Esophagus squamous epithelium (tissue), 5 donors: ENCODE measurements at regions of chr5 and their contacts with region 1.

Region 1: GRCh38 chr5:133051580-133052332 is at the start of gene HSPA4:
- DNase-seq: peak; percentile 89
- H3K4me3 ChIP-seq: peak within 1 kb of the TSS; percentile 79 to 99 (median 90)
- H3K27ac ChIP-seq: peak within 1 kb of the TSS; percentile 98 to 100 (median 99)
- H3K4me1 ChIP-seq: peaks cover 4 to 53% (median 26%) of the 10 kb centered on the region in 3 donors
- H3K27me3 ChIP-seq: no peaks in the 10 kb centered on the region
- CTCF ChIP-seq: peak in 2 of 6 experiments; percentile 1 to 3
- POLR2A ChIP-seq: peak in 3 of 4 donors; percentile 91 to 98 (median 96)
- total RNA-seq, gene HSPA4: 47.7 to 82.4 (median 67.3) TPM

Region 2: DNA sequence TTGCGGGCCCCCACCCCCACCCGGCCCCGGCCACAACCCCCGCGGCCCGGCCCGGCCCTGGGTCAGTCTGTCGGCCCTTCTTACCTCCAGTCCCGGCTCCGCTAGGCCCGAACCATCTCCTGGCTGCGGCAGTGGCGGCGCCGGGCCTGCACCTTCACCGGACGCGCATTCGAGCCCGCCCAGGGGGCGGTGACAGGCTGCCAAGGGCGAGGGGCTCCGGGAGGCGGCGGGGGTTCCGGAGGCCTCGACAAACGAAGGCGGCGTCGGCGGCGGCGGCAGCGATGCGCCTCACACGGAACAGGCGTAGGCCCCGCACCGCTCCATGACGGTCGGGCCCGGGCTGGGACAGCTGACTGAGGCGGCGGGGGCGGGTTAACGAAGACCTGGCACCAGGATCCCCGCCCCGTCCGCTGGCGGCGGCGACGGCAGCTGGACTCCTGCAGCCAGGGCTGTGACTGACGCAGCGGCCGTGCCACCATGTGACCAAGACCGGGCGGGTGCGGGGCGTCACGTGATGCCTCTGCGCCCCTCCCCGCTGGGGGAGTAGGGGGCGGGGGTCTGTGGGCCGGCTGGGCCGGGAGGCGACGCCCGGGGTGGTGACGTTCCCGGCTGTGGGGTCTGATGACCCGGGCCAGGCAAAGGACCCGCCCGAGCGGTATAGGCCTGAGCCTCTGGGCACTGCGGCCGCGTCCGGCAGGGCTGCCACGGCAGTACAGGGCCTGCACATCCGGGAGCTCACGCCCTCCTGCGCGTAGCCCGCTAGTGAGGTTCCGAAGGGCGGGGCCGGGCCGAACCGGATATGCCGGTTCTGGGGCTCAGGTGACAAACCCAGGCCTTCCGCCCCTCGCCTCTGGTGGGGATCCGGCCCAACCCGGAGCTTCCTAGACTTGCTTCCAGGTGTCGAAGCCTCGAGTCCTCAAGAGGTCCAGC is 88.3 kb before region 1 on chr5 and contains the start of gene AFF4:
- intact Hi-C with region 1: loop called (anchors 10 kb)
- DNase-seq: peak; percentile 89
- H3K4me3 ChIP-seq: peak within 1 kb of the TSS; percentile 81 to 99 (median 90)
- H3K27ac ChIP-seq: peak within 1 kb of the TSS; percentile 99 to 100 (median 100)
- H3K4me1 ChIP-seq: peaks cover 7 to 42% (median 17%) of the 10 kb centered on the region in 3 donors
- H3K27me3 ChIP-seq: no peaks in the 10 kb centered on the region
- CTCF ChIP-seq: peak in 3 of 6 experiments; percentile 3 to 24 (median 4)
- POLR2A ChIP-seq: peak in 3 of 4 donors; percentile 54 to 99 (median 98)
- total RNA-seq, gene AFF4: 35.1 to 69.2 (median 64.0) TPM